MCF 10A (cell line): ENCODE measurements at regions of chr2 and their contacts with region 1.

Region 1: DNA sequence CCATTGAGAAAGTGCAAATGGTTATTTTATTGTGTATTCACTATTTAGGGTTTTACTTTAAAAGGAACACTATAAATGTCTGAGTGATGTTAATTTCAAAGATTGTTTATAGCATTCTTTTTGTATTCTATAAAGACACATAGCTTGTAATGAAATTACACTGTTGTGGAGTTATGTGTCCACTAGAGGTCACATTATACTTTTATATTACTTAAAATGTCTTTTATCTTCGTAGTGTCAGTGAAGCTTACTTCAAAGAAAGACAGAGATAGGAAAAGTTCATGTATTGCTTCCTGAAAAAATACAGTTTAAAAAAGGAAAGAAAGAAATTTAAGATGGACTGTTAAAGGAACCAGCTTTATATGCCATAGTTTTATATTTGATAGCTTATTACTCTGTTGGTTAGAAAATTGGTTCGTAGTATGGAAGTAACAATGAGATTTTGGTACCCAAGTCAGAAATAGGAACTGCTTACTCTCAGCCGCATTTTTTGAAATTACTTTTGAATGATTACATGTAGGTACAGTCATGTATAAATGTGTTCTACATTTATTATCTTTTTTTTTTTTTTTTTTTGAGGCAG is 20.5 kb downstream of the APLF start:
- DNase-seq: peak; percentile 43
- H3K4me3 Mint-ChIP-seq: peak overlapping the region; percentile 28
- H3K27ac Mint-ChIP-seq: no peak overlapping the region
- H3K4me1 Mint-ChIP-seq: peaks cover 6% of the 10 kb centered on the region
- H3K27me3 Mint-ChIP-seq: no peaks in the 10 kb centered on the region
- CTCF ChIP-seq: peak; percentile 40

Region 2: DNA sequence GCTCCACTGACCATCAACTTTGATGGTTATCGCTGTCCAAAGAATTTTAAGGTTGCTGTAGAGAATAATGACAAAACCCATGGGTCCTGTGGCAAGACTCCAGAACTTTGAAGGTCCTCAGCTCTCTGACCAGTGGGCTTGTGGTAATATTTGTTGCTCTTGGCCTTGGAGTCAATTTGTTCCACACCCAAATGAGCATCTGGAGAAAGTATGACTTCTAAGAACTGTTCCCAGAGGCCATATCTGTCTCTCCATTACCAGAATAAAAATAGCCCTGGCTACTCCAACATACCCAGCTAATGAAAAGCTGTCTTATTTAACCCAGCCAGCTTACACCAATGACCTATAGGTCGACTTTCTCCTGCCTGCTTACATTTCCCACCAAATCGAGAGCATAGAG is 1586.5 kb before region 1 on chr2:
- CTCF ChIA-PET with region 1: no interaction called
- POLR2A ChIA-PET with region 1: no interaction called
- intact Hi-C with region 1: no loop called
- DNase-seq: no peak
- H3K4me3 Mint-ChIP-seq: no peak overlapping the region
- H3K27ac Mint-ChIP-seq: no peak overlapping the region
- H3K4me1 Mint-ChIP-seq: peaks cover 8% of the 10 kb centered on the region
- H3K27me3 Mint-ChIP-seq: no peaks in the 10 kb centered on the region
- CTCF ChIP-seq: no peak

Region 3: DNA sequence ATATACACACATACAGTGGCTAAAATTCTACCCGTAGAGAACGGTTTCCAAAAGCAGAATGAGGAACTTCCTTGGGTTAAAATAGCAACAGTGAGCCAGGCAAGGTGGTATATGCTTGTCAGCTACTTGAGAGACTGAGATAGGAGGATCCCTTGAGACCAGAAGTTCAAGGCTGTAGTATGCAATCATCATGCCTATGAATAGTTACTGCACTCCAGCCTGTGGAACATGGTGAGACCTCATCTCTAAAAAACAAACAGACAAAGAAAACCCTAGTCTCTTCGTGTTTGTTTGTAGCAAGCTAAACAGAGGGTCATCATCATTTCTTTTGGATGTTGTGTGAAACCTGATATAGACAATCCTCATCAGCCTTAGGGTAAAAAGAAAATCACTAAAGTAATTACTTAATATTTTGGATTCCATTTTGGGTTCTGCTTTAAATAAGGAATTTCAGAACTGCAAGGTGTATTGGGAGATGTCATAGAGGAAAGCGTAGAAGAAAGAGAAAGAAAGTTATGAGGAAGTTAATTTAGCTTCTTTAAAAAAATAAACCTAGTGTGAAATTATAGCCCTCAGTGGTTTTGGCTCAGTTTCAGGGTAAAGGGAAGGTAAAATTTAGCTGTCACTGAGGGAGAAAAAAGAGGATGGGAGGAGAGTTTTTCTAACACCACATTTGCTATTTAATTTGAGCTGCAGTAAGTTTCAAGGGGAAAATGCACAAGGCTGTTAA is 76.3 kb before region 1 on chr2:
- CTCF ChIA-PET with region 1: no interaction called
- POLR2A ChIA-PET with region 1: no interaction called
- intact Hi-C with region 1: no loop called
- DNase-seq: no peak
- H3K4me3 Mint-ChIP-seq: no peak overlapping the region
- H3K27ac Mint-ChIP-seq: no peak overlapping the region
- H3K4me1 Mint-ChIP-seq: no peaks in the 10 kb centered on the region
- H3K27me3 Mint-ChIP-seq: peaks cover 23% of the 10 kb centered on the region
- CTCF ChIP-seq: no peak

Region 4: GRCh38 chr2:68423966-68424650 is 63.8 kb before region 1 on chr2:
- CTCF ChIA-PET with region 1: no interaction called
- POLR2A ChIA-PET with region 1: no interaction called
- intact Hi-C with region 1: no loop called
- DNase-seq: no peak
- H3K4me3 Mint-ChIP-seq: no peak overlapping the region
- H3K27ac Mint-ChIP-seq: no peak overlapping the region
- H3K4me1 Mint-ChIP-seq: no peaks in the 10 kb centered on the region
- H3K27me3 Mint-ChIP-seq: no peaks in the 10 kb centered on the region
- CTCF ChIP-seq: no peak

Region 5: GRCh38 chr2:68594674-68595492 is 107.0 kb after region 1 on chr2:
- CTCF ChIA-PET with region 1: interaction called, 21 read pairs
- POLR2A ChIA-PET with region 1: interaction called, 9 read pairs
- intact Hi-C with region 1: loop called (anchors 1 kb)
- DNase-seq: peak; percentile 43
- H3K4me3 Mint-ChIP-seq: no peak overlapping the region
- H3K27ac Mint-ChIP-seq: no peak overlapping the region
- H3K4me1 Mint-ChIP-seq: no peaks in the 10 kb centered on the region
- H3K27me3 Mint-ChIP-seq: no peaks in the 10 kb centered on the region
- CTCF ChIP-seq: peak; percentile 70

Region 6: DNA sequence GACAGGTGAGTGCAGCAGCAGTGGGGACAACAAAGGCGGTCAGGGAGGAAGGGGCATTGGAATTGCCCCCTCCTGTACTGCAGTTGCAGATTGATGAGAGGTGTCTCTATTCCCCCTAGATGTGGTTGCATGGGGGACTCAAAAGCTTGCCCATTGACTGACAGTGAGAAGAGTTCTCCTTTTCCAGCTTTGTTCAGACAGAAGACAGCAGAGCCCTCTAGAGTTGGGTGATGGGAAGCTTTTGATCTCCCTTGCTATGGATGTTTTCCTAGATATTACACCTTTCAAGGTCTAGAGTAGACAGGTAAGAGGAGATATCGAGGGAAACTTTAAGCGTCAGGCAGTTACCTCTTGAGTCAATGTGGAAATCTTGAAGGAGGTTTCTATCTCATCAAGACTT is 158.4 kb after region 1 on chr2:
- CTCF ChIA-PET with region 1: interaction called, 6 read pairs
- POLR2A ChIA-PET with region 1: no interaction called
- intact Hi-C with region 1: loop called (anchors 1 kb)
- DNase-seq: peak; percentile 22
- H3K4me3 Mint-ChIP-seq: no peak overlapping the region
- H3K27ac Mint-ChIP-seq: no peak overlapping the region
- H3K4me1 Mint-ChIP-seq: no peaks in the 10 kb centered on the region
- H3K27me3 Mint-ChIP-seq: peaks cover 68% of the 10 kb centered on the region
- CTCF ChIP-seq: peak; percentile 15

Region 7: GRCh38 chr2:68715353-68716041 is 227.6 kb after region 1 on chr2:
- CTCF ChIA-PET with region 1: interaction called, 35 read pairs
- POLR2A ChIA-PET with region 1: interaction called, 4 read pairs
- intact Hi-C with region 1: loop called (anchors 1 kb)
- DNase-seq: peak; percentile 79
- H3K4me3 Mint-ChIP-seq: no peak overlapping the region
- H3K27ac Mint-ChIP-seq: no peak overlapping the region
- H3K4me1 Mint-ChIP-seq: no peaks in the 10 kb centered on the region
- H3K27me3 Mint-ChIP-seq: peaks cover 22% of the 10 kb centered on the region
- CTCF ChIP-seq: peak; percentile 79